B cell (primary cell): ENCODE measurements at regions of chr7 and their contacts with region 1.

Region 1: DNA sequence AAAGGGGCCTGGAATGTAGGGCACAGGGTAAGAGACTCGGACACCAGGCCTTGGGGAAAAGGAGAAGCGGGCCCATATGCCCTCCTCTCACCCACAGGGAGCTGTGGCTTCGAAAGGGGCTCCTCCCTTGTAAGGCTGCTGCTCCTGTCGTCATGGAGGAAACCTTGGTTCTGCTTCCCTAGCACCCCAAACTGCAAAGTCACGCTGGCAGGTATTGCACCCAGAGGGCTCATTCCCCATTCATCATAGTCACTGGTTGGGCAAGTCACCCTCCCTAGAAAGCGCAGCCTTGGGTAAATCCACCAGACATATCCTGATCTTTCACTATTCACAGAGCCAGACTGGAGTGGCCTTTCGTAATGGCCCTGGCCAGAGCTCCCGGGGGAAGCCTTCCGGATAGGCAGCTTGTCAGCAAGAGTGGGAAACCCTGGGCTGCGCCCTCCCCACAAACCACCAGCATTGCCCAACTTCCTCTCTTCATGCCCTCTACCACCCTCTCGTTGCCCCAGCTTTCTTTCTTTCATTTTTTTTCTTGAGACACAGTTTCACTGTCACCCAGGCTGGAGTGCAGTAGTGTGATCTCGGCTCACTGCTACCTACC is 121.0 kb downstream of the HIP1 start:
- DNase-seq: peak; percentile 76
- ATAC-seq: peak; percentile 73
- H3K4me3 ChIP-seq: peak overlapping the region in 3 of 5 experiments; percentile 6 to 51 (median 38)
- H3K4me3 Mint-ChIP-seq: peak overlapping the region; percentile 89
- H3K27ac ChIP-seq: peak overlapping the region; percentile 11 to 47
- H3K27ac Mint-ChIP-seq: peak overlapping the region; percentile 95
- H3K4me1 ChIP-seq: peaks cover 53 to 58% of the 10 kb centered on the region in 2 donors
- H3K4me1 Mint-ChIP-seq: peaks cover 54% of the 10 kb centered on the region
- H3K27me3 ChIP-seq: no peaks in the 10 kb centered on the region
- H3K27me3 Mint-ChIP-seq: no peaks in the 10 kb centered on the region
- CTCF ChIP-seq: no peak

Region 2: DNA sequence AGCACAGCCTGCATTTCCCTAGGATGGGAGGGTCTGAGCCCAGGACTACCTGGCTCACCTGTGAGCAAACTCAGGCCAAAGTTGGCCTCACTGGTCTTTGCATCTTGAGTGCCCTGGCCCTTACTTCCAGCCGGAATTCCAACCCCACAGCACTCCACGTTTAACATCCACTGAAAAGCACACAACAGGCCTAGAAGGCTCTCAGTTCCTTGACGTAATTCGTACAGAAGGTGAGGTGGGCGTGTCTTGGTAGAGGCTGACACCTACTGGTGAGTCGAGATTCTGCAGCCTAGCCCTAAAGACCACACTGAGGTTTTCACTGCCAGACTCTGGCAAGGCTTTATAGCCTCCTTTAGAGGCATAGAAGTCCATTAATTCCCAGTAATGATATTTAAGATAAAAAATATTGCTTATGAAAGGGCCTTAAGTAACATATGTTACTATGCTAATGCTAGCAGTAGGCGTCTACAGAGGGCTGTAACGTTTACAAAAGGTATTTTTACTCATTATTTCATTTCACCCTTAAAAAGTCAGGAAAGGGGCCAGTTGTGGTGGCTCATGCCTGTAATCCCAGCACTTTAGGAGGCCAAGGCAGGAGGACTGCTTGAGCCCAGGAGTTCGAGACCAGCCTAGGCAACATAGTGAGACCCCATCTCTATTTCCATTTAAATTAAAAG is 25.2 kb after region 1 on chr7:
- CTCF ChIA-PET with region 1: interaction called, 5 read pairs
- POLR2A ChIA-PET with region 1: no interaction called
- intact Hi-C with region 1: loop called (anchors 1 kb)
- DNase-seq: peak; percentile 81
- ATAC-seq: peak; percentile 82
- H3K4me3 ChIP-seq: no peak overlapping the region
- H3K4me3 Mint-ChIP-seq: peak overlapping the region; percentile 13
- H3K27ac ChIP-seq: no peak overlapping the region
- H3K27ac Mint-ChIP-seq: no peak overlapping the region
- H3K4me1 ChIP-seq: peaks cover 11 to 14% of the 10 kb centered on the region in 2 donors
- H3K4me1 Mint-ChIP-seq: peaks cover 14% of the 10 kb centered on the region
- H3K27me3 ChIP-seq: peaks cover 0 to 12% (median 4%) of the 10 kb centered on the region in 4 experiments
- H3K27me3 Mint-ChIP-seq: no peaks in the 10 kb centered on the region
- CTCF ChIP-seq: peak; percentile 86

Region 3: GRCh38 chr7:75662579-75663301 is 45.0 kb after region 1 on chr7:
- CTCF ChIA-PET with region 1: no interaction called
- POLR2A ChIA-PET with region 1: interaction called, 5 read pairs
- intact Hi-C with region 1: loop called (anchors 2 kb)
- DNase-seq: peak; percentile 83
- ATAC-seq: peak; percentile 86
- H3K4me3 ChIP-seq: peak overlapping the region in 2 of 5 experiments; percentile 13 to 50
- H3K4me3 Mint-ChIP-seq: peak overlapping the region; percentile 70
- H3K27ac ChIP-seq: peak overlapping the region; percentile 49 to 60
- H3K27ac Mint-ChIP-seq: peak overlapping the region; percentile 86
- H3K4me1 ChIP-seq: peaks cover 18 to 22% of the 10 kb centered on the region in 2 donors
- H3K4me1 Mint-ChIP-seq: peaks cover 26% of the 10 kb centered on the region
- H3K27me3 ChIP-seq: no peaks in the 10 kb centered on the region
- H3K27me3 Mint-ChIP-seq: no peaks in the 10 kb centered on the region
- CTCF ChIP-seq: no peak